Motor neuron (in vitro differentiated cells): ENCODE measurements at regions of chr16 and their contacts with region 1.

Region 1: DNA sequence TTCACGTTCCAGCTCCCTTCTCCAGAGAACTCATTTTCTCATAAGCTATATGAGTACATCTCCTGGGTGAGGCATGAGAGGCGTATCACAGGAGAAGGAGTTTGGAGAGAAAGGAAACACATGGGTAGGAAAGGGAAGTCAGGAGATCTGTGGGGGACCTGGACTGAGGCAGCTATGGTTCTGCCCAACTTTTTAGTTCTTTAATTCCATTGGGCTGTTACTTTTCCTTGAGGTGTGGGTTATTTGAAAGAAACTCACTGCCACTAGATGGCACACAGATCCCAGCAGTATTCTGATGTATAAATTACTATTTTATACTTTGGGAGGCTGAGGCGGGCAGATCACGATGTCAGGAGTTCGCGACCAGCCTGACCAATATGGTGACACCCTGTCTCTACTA is 63.6 kb downstream of the NUP93 start:
- ATAC-seq: peak in 4 of 8 experiments; percentile 25 to 81 (median 76)
- H3K4me3 ChIP-seq: no peak overlapping the region
- H3K27ac ChIP-seq: no peak overlapping the region
- H3K4me1 ChIP-seq: peaks cover 4 to 11% of the 10 kb centered on the region in 2 donors

Region 2: DNA sequence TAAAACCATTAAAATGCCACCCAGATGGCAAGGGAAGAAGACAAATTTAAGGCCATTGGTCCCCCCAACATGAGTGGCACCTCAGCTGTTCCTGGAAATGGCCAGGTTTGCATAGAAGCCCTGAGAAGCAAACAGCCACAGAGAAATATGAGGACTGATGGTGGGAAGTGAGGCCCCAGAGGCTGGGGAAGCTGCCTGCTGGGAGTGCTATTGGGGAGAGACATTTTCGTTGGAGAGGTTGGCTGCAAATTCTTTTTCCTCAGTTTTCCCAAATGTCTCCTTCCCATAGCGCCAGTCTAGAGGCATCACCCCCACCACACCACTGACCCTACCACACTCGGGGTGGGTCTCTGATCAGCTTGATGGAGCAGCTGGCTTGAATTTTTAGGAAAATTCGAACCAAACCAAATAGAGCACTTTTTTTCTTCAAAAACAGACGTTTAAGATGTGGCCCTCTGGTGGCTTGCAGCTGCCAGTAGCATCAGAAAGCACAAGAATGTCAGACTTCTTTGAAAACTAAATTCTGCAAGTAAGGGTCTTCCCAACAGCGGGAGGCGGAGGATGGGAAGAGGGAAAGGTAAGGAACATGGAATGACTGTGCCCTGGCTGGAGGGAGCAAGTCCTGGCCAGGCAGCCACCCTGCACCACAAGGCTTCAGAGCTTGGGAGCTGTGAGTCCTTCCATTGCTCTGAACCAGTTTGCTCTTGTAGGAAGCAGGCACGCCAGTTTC is 58.3 kb after region 1 on chr16:
- in situ Hi-C with region 1: loop called in 1 of 9 experiments (anchors 10 kb)
- ATAC-seq: no peak
- H3K4me3 ChIP-seq: no peak overlapping the region
- H3K27ac ChIP-seq: no peak overlapping the region
- H3K4me1 ChIP-seq: peaks cover 29 to 30% of the 10 kb centered on the region in 2 donors

Region 3: DNA sequence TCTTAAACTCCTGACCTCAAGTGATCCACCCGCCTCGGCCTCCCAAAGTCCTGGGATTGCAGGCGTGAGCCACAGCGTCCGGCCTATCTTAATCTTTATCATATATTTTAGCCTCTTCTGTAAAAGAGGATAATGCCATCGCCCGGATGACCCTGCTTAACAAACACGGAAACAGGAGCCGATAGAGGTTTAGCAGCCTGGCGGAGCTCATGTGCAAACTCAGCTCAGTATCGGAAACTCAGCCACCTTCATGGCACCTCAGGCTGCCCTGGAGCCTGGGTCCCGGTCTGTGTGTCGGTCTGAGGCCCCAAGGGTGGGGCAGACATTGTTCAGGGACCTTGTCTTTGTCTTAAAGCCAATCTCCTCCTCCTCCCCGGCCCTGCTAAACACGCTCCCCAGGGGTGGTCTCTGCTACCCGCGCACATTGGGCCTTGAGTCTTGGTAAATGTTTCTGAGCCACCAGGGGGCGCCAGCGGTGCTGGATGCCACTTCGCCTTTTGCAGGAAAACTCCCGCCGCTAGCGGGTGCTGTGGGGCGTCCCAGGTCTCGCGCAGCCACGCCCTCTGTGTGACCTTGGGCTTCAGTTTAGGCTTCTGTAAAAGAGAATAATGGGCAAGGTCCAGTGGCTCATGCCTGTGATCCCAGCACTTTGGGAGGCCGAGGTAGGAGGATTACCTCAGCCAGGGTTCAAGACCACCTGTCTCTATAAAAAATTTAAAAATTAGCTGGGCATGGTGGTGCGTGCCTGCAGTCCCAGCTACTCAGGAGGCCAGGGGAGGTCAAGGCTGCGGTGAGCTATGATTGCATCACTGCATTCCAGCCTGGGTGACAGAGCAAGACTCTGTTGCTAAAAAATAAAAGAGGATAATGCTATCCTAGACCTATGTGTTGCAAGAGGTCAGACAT is 171.0 kb after region 1 on chr16:
- in situ Hi-C with region 1: no loop called
- ATAC-seq: peak in 3 of 8 experiments; percentile 73 to 90 (median 82)
- H3K4me3 ChIP-seq: no peak overlapping the region
- H3K27ac ChIP-seq: no peak overlapping the region
- H3K4me1 ChIP-seq: peaks cover 0 to 4% of the 10 kb centered on the region in 2 donors